ENCODE measurements at regions of chr2 and their contacts with region 1.

Region 1: DNA sequence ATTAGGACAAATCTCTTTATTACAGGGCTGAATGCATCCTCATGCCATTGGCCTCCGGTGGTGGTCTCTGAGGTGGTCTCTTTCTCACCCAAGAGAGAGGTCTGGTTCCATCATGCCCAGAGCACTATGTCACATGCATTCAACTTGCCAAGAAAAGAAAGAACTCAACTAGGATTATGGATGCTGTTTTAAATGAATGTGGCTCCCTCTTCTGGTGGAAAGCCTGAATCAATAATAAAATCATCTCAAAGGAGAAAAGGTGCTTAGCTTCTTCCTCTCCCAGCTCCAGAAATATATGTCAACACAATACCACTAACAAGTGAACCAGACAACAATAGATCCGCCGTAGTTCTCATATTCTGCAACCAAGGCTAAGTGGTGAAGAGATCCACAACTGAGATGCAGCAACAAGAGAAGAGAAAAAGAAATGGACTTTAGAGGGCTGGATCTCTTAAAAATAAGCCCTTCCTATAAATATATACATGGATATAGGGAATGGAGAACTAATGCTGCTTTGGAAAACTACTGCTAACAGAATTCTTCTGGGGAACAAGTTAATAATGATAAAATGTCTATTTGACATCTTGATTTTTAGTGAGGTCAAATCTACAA is 396.8 kb downstream of the NCKAP5 start:
- DNase-seq: peak in 1 of 2 donors; percentile 4
- ATAC-seq: peak in 1 of 8 donors; percentile 35
- H3K4me3 ChIP-seq: no peak overlapping the region
- H3K27ac ChIP-seq: no peak overlapping the region
- H3K4me1 ChIP-seq: no peaks in the 10 kb centered on the region
- H3K27me3 ChIP-seq: no peaks in the 10 kb centered on the region
- CTCF ChIP-seq: peak in 8 of 9 donors; percentile 18 to 64 (median 59)

Region 2: DNA sequence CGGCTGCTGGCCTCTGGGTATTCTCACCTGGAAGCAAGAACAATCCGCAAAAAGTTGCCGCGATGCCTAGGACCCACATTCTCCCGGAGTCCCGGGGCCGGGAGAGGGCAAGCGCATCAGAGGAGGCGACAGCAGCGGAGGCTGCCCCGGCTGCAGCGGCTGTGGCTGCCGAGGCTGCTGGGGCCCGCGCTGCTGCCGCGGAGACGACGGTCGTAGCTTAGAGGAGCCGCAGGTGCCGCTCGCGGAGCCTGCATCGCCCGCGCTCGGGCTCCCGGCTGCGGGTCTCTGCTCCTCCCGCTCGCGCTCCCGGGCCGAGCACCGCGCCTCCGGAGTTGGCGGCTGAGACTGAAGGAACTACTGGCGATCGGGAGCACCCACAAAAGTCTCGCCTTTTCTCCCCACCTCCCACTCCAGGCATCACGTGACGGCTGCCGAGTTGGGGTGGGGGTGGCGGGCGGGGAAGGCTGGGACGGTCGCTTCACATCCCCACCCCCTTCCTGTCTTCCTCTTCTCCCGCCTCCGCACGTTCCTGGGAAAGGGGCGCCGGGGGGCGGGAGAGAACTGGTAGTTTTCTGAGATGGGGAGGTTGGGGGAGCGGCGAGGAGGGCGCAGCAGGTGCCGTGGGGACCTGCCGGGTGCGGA is 501.5 kb before region 1 on chr2 and contains the start of gene LYPD1:
- intact Hi-C with region 1: loop called in 1 of 10 experiments (anchors 10 kb)
- DNase-seq: no peak
- ATAC-seq: peak; percentile 24 to 70 (median 42)
- H3K4me3 ChIP-seq: peak within 1 kb of the TSS; percentile 40 to 63 (median 51)
- H3K27ac ChIP-seq: no peak within 1 kb of the TSS
- H3K4me1 ChIP-seq: peaks cover 9 to 37% (median 24%) of the 10 kb centered on the region in 9 donors
- H3K27me3 ChIP-seq: peaks cover 7 to 76% (median 61%) of the 10 kb centered on the region in 7 donors
- CTCF ChIP-seq: no peak
- total RNA-seq, gene LYPD1: 0.16 to 0.72 (median 0.39) TPM in 8 of 10 donors, not detected in the others

Region 3: DNA sequence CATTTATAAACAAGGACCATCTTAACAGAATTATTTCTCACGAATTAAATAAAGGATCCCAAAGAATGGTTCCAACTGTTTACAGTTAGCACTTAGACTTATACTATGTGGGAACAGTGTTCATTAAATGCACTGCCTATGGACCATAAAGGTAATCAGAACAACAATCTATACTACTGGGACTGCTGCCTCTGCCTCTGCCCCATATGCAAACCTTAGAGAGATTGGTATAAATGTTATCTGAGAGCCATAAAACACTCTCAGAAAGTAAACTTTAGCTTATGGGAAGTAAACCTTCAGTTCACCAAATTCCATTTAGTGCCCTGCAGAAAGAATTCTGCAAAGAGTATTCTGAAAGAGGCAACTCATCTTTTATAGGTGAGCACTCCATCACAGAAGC is 51.2 kb before region 1 on chr2:
- intact Hi-C with region 1: no loop called
- DNase-seq: no peak
- ATAC-seq: no peak
- H3K4me3 ChIP-seq: no peak overlapping the region
- H3K27ac ChIP-seq: no peak overlapping the region
- H3K4me1 ChIP-seq: peaks cover 0 to 14% (median 0%) of the 10 kb centered on the region in 9 donors
- H3K27me3 ChIP-seq: no peaks in the 10 kb centered on the region
- CTCF ChIP-seq: no peak

Measured in heart right ventricle (tissue), 16 donors.